GM12878 (cell line): ENCODE measurements at regions of chr1 and their contacts with region 1.

Region 1: DNA sequence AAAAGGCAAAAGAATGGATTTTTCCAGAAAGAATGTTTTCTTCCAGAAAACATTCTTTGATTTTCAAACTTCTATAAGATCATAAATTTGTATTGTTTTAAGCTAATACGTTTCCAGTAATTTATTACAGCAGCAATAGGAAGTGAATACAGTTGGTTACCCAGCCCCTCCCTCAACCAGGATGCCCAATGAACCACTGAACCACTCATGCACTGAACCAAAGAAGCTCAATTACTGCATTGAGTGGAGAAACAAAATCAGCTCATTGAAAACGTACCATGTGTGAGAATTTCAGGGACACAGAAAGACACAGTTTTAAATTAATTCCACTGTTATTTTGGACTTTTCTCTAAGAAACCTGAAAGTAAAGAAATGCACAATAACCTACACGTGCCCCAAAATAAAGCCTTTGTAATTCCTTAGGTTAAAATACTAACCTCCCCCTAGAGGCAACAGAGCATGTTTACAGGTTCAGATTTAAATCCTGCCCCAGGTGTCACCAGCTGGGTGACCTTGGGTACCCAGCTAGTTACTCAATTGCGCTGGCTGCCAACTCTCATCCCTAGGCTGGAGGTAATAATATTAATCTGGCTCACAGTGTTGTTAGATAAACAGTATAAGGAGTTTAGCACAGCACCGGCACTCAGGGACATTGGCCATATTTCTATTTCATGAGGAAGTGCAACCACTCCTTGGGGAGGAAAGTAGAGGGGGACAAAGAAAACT is 111.7 kb downstream of the NMNAT2 start:
- DNase-seq: no peak
- ATAC-seq: peak; percentile 75
- H3K4me3 ChIP-seq: no peak overlapping the region
- H3K27ac ChIP-seq: no peak overlapping the region
- H3K4me1 ChIP-seq: peaks cover 12% of the 10 kb centered on the region
- H3K27me3 ChIP-seq: no peaks in the 10 kb centered on the region
- CTCF ChIP-seq: peak; percentile 38 to 48 (median 48); a peak in 5 of 6 replicates
- EP300 ChIP-seq: no peak
- POLR2A ChIP-seq: no peak
- RAD21 ChIP-seq: 0 out of 2 replicates have a peak, but pooled peaks have one; percentile 6

Region 2: DNA sequence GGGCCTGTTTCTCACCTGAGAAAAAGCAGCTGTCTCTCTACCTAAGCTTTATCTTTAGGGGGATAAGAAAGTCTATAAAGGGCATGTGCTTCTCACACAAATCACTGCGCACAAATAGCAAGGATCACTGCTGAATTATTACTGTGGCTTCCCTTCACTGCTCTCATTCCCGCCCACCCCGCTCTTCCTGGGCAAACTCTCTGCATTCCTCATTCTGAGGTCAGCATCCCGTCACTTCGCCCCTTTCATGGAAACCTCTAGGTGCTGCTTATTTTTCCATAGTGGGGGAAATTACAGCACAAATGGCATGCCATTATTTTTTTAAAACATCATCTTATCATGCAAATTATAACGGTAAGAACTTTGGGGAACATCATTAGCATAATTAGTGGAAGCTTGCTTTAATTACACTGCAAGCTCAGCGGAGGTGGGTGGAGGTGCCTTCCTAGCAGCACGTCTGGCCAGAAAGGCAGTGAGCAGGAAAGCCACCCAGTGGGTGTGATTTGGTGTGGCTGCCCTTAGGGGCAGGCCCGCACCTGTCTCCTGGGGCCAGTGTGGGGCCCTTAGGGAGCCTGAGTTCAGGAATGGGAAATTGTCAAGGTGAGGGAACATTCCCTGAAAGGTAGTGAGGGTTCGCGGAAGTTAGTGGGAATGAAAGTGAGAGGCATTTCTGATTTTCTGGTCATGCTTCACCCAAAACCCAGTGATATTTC is 14.5 kb before region 1 on chr1:
- CTCF ChIA-PET with region 1: interaction called, 17 read pairs
- POLR2A ChIA-PET with region 1: interaction called, 3 read pairs
- RAD21 ChIA-PET with region 1: interaction called, 3 read pairs
- SMC1A ChIA-PET with region 1: interaction called, 12 read pairs
- in situ Hi-C with region 1: no loop called
- intact Hi-C with region 1: loop called (anchors 2 kb)
- DNase-seq: no peak
- ATAC-seq: peak; percentile 23; the same call in 1 of the 3 replicates
- H3K4me3 ChIP-seq: no peak overlapping the region
- H3K27ac ChIP-seq: no peak overlapping the region
- H3K4me1 ChIP-seq: no peaks in the 10 kb centered on the region; the same call in 1 of the 2 replicates
- H3K27me3 ChIP-seq: peaks cover 0 to 2% of the 10 kb centered on the region in 2 experiments; a peak in 1 of 4 replicates
- CTCF ChIP-seq: no peak
- EP300 ChIP-seq: no peak
- POLR2A ChIP-seq: no peak
- RAD21 ChIP-seq: no peak

Region 3: DNA sequence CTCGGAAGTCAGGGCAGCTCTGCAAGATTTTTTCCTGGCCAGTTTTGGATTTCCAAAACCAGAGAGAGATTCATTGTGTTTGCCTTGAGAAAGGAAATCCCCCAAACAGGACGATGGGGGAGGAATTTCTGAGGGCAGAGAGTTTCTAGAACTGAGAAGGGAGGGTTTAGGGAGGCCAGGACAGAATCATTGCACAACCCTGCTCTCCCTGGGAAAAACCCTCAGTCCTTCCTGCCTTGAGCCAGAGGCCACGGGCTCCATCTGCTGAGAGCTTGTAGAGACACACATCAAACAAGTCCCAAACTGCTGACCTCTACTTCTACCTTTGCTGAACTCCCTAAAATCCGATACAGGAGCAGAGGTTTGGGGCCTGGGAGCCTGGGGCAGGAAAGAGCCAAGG is 12.0 kb after region 1 on chr1:
- CTCF ChIA-PET with region 1: interaction called, 37 read pairs
- POLR2A ChIA-PET with region 1: interaction called, 4 read pairs
- RAD21 ChIA-PET with region 1: interaction called, 22 read pairs
- SMC1A ChIA-PET with region 1: interaction called, 48 read pairs
- in situ Hi-C with region 1: no loop called
- intact Hi-C with region 1: no loop called
- DNase-seq: peak; percentile 55
- ATAC-seq: peak; percentile 96
- H3K4me3 ChIP-seq: no peak overlapping the region
- H3K27ac ChIP-seq: no peak overlapping the region
- H3K4me1 ChIP-seq: peaks cover 6% of the 10 kb centered on the region
- H3K27me3 ChIP-seq: no peaks in the 10 kb centered on the region
- CTCF ChIP-seq: peak; percentile 44 to 92 (median 57); a peak in 5 of 6 replicates
- EP300 ChIP-seq: no peak
- POLR2A ChIP-seq: no peak
- RAD21 ChIP-seq: peak; percentile 82

Region 4: GRCh38 chr1:183353597-183353996 is 47.1 kb after region 1 on chr1:
- CTCF ChIA-PET with region 1: no interaction called
- POLR2A ChIA-PET with region 1: no interaction called
- RAD21 ChIA-PET with region 1: no interaction called
- SMC1A ChIA-PET with region 1: no interaction called
- in situ Hi-C with region 1: no loop called
- intact Hi-C with region 1: no loop called
- DNase-seq: no peak
- ATAC-seq: no peak
- H3K4me3 ChIP-seq: no peak overlapping the region
- H3K27ac ChIP-seq: no peak overlapping the region
- H3K4me1 ChIP-seq: no peaks in the 10 kb centered on the region
- H3K27me3 ChIP-seq: peaks cover 0 to 2% of the 10 kb centered on the region in 2 experiments; a peak in 1 of 4 replicates
- CTCF ChIP-seq: no peak
- EP300 ChIP-seq: no peak
- POLR2A ChIP-seq: no peak
- RAD21 ChIP-seq: no peak